ENCODE measurements at regions of chr1 and their contacts with region 1.

Region 1: DNA sequence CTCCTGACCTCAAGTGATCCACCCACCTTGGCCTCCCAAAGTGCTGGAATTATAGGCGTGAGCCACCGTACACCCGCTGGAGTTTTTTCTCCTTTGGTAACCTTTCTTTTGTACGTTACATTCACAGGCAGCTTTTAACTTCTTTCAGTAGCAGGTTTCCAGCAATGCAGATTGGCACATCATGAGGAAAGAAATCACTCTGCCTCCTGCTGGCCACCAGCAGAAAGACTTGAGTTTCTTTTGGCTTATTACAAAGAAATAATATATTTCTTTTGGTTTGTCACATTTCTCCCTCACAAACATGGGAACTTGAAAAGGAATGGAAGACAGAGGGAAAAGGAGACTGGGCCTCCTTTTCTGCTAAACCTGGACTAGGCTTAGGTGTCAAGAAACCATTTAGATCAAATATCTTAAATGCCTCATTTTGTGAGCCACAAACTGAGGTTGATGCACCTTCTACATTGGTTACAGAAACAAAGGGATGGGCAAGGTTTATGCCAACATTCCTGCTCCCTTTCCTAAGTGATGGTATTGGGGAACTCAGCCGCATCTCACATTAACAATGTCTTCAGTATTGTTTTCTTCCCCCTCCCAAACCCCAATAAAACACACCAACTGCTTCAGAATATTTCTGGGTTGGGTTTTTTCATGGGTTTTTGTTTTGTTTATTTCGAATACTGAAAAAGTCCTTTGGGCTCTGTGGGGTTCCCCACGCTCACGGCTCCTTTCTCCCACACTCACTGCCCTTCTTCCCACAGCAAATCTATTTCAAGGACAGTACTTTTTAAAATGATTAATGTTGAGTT is 7.7 kb downstream of the ENSA start:
- DNase-seq: peak; percentile 40 to 79 (median 54)
- H3K4me3 ChIP-seq: no peak overlapping the region
- H3K4me3 Mint-ChIP-seq: peak overlapping the region in 2 of 7 donors; percentile 35 to 37
- H3K27ac ChIP-seq: no peak overlapping the region
- H3K27ac Mint-ChIP-seq: peak overlapping the region; percentile 35 to 95 (median 86)
- H3K4me1 ChIP-seq: peaks cover 30% of the 10 kb centered on the region
- H3K4me1 Mint-ChIP-seq: peaks cover 29 to 63% (median 55%) of the 10 kb centered on the region in 3 donors
- H3K27me3 ChIP-seq: no peaks in the 10 kb centered on the region
- H3K27me3 Mint-ChIP-seq: no peaks in the 10 kb centered on the region

Region 2: DNA sequence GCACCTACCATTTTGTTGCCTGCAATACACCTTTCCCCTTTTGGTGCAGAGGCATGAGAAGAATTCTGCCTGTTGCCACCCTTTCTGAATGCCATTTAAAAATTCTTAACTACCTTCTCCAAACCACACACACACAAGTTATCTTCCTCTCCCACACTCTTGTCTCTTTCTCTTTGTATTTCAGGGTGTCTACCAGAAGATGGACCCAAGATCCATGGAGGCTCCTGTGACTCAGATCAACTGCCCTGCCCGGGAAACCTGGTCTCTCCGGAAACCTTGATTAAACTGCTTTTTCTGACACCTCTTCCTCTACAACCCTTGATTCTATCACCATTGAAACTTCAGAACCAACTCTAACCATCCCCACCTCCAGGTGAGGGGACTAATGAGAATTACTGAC is 136.8 kb before region 1 on chr1:
- CTCF ChIA-PET with region 1: no interaction called
- POLR2A ChIA-PET with region 1: no interaction called
- DNase-seq: no peak
- H3K4me3 ChIP-seq: no peak overlapping the region
- H3K4me3 Mint-ChIP-seq: peak overlapping the region in 3 of 7 donors; percentile 49 to 67 (median 66)
- H3K27ac ChIP-seq: no peak overlapping the region
- H3K27ac Mint-ChIP-seq: peak overlapping the region in 6 of 8 donors; percentile 21 to 78 (median 34)
- H3K4me1 ChIP-seq: peaks cover 9% of the 10 kb centered on the region
- H3K4me1 Mint-ChIP-seq: peaks cover 20 to 24% (median 21%) of the 10 kb centered on the region in 3 donors
- H3K27me3 ChIP-seq: no peaks in the 10 kb centered on the region
- H3K27me3 Mint-ChIP-seq: peaks cover 0 to 2% of the 10 kb centered on the region in 2 donors

Region 3: GRCh38 chr1:150567717-150568593 is 53.7 kb before region 1 on chr1:
- CTCF ChIA-PET with region 1: interaction called, 244 read pairs
- POLR2A ChIA-PET with region 1: interaction called, 42 read pairs
- DNase-seq: peak in 1 of 5 donors; percentile 63
- H3K4me3 ChIP-seq: peak overlapping the region; percentile 59
- H3K4me3 Mint-ChIP-seq: peak overlapping the region; percentile 78 to 100 (median 88)
- H3K27ac ChIP-seq: peak overlapping the region; percentile 49
- H3K27ac Mint-ChIP-seq: peak overlapping the region; percentile 90 to 98 (median 96)
- H3K4me1 ChIP-seq: peaks cover 95% of the 10 kb centered on the region
- H3K4me1 Mint-ChIP-seq: peaks cover 79 to 96% (median 88%) of the 10 kb centered on the region in 3 donors
- H3K27me3 ChIP-seq: no peaks in the 10 kb centered on the region
- H3K27me3 Mint-ChIP-seq: no peaks in the 10 kb centered on the region